ENCODE measurements at regions of chr3 and their contacts with region 1.

Region 1: GRCh38 chr3:58491506-58492402 is at the start of gene KCTD6:
- DNase-seq: peak; percentile 82 to 97
- H3K4me3 ChIP-seq: peak within 1 kb of the TSS; percentile 60
- H3K4me1 ChIP-seq: peaks cover 34% of the 10 kb centered on the region
- H3K27me3 ChIP-seq: no peaks in the 10 kb centered on the region

Region 2: DNA sequence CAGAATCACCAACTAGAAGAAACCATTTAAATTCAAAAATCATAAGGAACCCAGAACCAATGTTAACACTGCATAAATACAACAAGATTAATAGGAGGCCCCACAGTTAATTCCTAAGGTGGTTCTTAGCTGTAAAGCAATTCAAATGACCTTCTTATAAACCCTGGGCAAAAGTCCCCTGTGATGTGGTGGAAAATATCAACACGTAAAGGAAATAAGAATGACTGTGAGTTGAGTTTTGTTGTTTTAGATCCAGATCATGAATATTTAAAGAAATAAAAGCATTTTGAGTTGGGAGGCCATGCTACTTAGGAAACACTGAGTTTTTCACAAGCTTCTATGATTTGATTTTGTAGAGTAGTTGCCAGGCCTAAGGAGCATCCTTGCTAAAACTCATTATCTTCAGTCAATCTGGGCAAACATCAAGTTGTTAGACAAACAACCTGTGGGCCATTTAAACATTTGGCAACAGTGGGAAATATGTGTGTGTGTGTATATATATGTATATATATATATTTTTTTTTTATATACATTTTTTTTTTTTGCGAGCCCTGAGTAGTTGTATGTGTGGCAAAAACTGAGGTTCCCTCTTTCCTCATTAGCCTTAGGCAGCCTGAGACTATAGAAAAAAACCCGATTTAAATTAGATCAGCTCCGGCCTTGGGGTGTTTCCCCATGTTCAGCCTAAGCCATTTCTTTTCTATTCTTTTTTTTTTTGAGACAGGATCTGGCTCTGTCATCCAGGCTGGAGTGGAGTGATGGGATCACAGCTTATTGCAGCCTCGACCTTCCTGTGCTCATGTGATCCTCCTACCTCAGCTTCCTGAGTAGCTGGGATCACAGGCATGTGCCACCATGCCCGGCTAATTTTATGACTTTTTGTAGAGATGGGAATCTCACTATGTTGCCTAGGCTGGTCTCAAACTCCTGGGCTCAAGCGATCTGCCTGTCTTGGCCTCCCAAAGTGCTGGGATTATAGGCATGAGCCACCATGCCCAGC is 167.1 kb before region 1 on chr3:
- in situ Hi-C with region 1: loop called (anchors 10 kb)
- DNase-seq: no peak
- H3K4me3 ChIP-seq: no peak overlapping the region
- H3K4me1 ChIP-seq: no peaks in the 10 kb centered on the region; the same call in 1 of the 2 replicates
- H3K27me3 ChIP-seq: no peaks in the 10 kb centered on the region

Region 3: GRCh38 chr3:58608648-58609047 is 116.9 kb after region 1 on chr3:
- in situ Hi-C with region 1: no loop called
- DNase-seq: no peak
- H3K4me3 ChIP-seq: no peak overlapping the region
- H3K4me1 ChIP-seq: no peaks in the 10 kb centered on the region
- H3K27me3 ChIP-seq: no peaks in the 10 kb centered on the region